ENCODE measurements at regions of chr2 and their contacts with region 1.

Region 1: DNA sequence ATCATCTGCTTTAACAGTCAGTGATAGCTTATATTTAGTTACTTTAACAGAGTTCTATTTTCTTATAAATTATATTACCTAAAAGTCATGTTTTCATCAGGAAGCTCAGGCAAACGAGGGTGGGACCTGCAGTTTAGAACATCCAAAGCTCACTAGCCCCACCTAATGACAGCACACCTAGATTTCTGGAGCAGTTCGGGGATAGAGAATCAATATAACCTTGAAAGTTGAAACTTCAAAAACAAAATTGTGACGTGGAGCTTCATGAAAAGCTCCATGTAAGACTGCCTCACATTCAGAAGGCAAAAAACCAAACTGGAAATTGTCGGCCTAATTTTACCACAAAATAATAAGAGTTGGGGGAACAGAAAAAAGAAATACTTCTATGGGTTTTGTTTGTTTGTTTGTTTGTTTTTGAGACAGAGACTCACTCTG is 185.9 kb upstream of the CCDC150 start:
- DNase-seq: peak; percentile 33
- ATAC-seq: peak; percentile 89
- H3K4me3 Mint-ChIP-seq: no peak overlapping the region
- H3K27ac Mint-ChIP-seq: no peak overlapping the region
- H3K4me1 Mint-ChIP-seq: 0 out of 2 replicates have a peak, but pooled peaks cover 2% of the 10 kb centered on the region
- H3K27me3 Mint-ChIP-seq: no peaks in the 10 kb centered on the region
- CTCF ChIP-seq: no peak; the same call in 1 of the 2 replicates

Region 2: DNA sequence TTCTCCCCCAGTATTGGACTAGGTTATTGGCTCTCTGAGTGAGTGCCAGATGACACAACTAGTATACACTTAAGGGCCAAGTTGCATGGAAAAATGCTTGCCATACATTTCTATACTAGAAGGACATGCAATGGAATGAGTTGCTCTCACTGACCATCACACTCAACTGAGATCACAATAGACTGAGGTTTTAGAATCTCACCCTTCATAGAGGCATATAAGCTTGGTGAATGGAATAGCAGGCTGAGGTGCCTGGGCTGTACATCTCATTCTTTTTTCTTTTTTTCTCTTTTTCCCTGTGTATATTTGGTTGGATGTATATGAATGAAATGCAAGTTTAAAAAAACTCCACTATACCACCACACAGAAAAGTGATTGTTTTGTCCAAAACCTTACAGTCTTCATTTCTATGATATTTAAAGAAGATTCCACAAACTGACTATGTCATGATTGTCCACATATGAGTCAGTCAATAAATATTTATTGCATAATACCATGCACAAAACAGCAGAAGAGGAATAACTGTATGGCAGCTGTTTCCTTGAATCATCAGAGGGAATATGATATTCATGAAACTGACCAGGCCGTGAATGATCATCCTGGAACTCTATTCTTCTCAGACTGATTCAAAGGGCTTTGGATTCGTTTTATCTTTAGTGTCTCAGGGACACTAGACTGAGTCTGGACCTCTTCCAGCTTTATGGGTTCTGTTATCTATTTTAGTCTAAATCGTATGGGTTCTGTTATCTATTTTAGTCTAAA is 159.7 kb before region 1 on chr2:
- CTCF ChIA-PET with region 1: interaction called, 11 read pairs
- POLR2A ChIA-PET with region 1: no interaction called
- DNase-seq: no peak
- ATAC-seq: no peak
- H3K4me3 Mint-ChIP-seq: no peak overlapping the region
- H3K27ac Mint-ChIP-seq: no peak overlapping the region
- H3K4me1 Mint-ChIP-seq: no peaks in the 10 kb centered on the region
- H3K27me3 Mint-ChIP-seq: no peaks in the 10 kb centered on the region
- CTCF ChIP-seq: no peak

Region 3: DNA sequence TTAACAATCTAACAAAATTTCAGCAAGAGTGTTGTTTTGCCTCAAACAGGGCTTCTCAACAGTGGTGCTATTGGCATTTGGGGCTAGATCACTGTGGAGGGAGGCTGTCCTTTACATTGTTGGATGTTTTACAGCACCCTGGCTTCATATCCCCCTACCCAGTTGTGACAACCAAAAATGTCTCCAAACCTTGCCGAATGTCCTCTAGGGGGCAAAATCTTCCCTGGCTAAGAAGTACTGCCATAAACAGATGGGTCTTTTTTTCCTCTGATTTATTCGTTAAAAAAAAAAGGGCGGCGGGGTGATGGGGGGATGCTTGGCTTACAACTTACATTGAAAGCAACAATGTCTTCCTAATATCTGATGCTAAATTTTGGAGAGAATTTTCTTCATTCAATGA is 21.7 kb before region 1 on chr2:
- CTCF ChIA-PET with region 1: interaction called, 12 read pairs
- POLR2A ChIA-PET with region 1: no interaction called
- DNase-seq: peak; percentile 46
- ATAC-seq: peak; percentile 98
- H3K4me3 Mint-ChIP-seq: no peak overlapping the region
- H3K27ac Mint-ChIP-seq: no peak overlapping the region
- H3K4me1 Mint-ChIP-seq: no peaks in the 10 kb centered on the region; the same call in 1 of the 2 replicates
- H3K27me3 Mint-ChIP-seq: no peaks in the 10 kb centered on the region
- CTCF ChIP-seq: no peak; the same call in 1 of the 2 replicates

Region 4: DNA sequence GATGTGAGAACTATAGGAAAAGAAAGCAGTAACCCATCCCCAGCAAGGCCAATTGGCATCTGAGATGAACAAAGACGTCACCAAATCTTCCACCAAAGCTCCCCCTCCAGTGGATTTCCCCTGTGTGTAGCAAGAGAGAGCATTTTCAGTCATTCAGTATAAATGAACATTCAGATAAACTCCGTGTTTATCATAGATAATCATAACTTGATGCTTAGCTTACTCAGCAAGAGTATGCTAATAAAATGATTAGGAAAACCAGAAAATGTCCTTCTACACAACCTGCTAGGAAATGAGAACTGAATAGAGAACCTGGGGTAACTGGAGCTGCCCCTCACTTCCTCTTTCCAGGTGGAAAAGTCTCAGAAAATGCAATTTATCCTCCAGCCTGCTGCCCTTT is 12.1 kb before region 1 on chr2:
- CTCF ChIA-PET with region 1: interaction called, 11 read pairs
- POLR2A ChIA-PET with region 1: interaction called, 4 read pairs
- DNase-seq: no peak
- ATAC-seq: no peak
- H3K4me3 Mint-ChIP-seq: no peak overlapping the region
- H3K27ac Mint-ChIP-seq: no peak overlapping the region
- H3K4me1 Mint-ChIP-seq: 0 out of 2 replicates have a peak, but pooled peaks cover 4% of the 10 kb centered on the region
- H3K27me3 Mint-ChIP-seq: no peaks in the 10 kb centered on the region
- CTCF ChIP-seq: no peak

Region 5: DNA sequence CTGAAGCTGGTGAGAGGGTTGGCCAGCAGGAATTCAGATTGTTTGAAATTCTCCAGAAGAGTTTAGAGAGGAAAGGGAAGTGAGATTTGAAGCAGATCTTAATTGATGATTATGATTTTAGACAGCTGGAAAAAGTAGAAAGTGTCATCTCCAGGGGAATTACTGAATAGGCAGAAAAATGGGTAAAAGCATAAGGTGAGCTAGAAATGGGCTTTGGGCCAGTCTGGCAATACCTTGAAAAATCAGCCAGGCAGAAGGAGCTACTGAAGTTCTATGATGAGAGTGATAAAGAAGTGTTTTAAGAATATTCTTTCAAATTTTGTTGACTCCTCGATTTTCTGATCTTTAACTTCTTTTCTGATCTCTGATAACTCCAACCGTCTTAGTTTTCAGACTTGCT is 13.0 kb after region 1 on chr2:
- CTCF ChIA-PET with region 1: interaction called, 10 read pairs
- POLR2A ChIA-PET with region 1: no interaction called
- DNase-seq: no peak
- ATAC-seq: no peak
- H3K4me3 Mint-ChIP-seq: no peak overlapping the region
- H3K27ac Mint-ChIP-seq: no peak overlapping the region
- H3K4me1 Mint-ChIP-seq: peaks cover 33% of the 10 kb centered on the region
- H3K27me3 Mint-ChIP-seq: no peaks in the 10 kb centered on the region
- CTCF ChIP-seq: no peak

Region 6: DNA sequence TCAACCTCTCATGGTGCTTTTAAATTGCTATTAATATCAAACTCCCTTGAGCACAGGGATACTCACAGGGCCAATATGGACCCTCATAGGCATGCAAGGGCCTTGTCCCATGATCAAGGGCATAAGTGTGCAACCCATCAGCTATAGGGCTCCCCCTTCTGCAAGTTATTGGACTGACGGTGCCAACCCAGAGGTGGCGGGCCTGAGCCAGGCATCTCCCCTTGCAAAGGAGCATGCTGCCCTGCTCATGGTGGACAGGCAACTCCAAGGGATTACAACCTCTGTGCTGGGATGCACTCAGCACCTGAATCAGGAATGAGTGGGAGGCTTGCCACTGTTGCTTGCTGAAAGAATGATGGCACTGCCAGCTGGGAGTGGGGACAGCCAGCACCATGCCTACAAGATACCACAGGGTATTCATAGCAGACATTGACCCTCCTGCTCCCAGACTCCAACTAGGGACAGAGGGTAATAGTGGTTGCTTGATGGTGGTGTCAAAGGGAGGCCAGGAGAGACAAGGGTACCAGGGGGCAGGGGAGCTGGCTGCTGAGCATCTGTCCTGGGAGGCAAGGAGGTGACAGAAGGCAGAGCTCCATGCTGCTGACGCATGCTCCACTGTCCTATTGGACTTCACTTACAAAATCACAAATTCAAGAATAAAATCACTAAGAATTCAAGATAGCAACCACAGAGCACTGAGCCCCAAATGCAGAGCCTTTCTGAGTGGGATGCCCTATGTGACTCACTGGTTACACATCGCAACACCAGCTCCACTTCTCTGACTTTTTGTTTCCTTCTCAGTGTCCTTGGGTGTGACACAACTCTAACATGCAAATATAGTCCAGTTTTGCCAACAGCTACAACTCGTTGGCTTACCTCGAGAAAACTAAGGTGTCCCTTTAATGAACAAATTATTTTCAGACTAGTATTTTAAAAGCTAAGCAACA is 28.8 kb after region 1 on chr2:
- CTCF ChIA-PET with region 1: no interaction called
- POLR2A ChIA-PET with region 1: no interaction called
- DNase-seq: peak; percentile 17
- ATAC-seq: peak; percentile 56
- H3K4me3 Mint-ChIP-seq: no peak overlapping the region
- H3K27ac Mint-ChIP-seq: no peak overlapping the region
- H3K4me1 Mint-ChIP-seq: 0 out of 2 replicates have a peak, but pooled peaks cover 3% of the 10 kb centered on the region
- H3K27me3 Mint-ChIP-seq: no peaks in the 10 kb centered on the region
- CTCF ChIP-seq: no peak

Measured in WTC11 (cell line).